ENCODE measurements at regions of chr6 and their contacts with region 1.

Region 1: GRCh38 chr6:5723841-5724691 is 282.7 kb downstream of the NRN1 start:
- DNase-seq: peak; percentile 65
- ATAC-seq: peak; percentile 92
- H3K4me3 Mint-ChIP-seq: peak overlapping the region; percentile 91
- H3K27ac Mint-ChIP-seq: peak overlapping the region; percentile 99
- H3K4me1 Mint-ChIP-seq: peaks cover 78% of the 10 kb centered on the region
- H3K27me3 Mint-ChIP-seq: no peaks in the 10 kb centered on the region
- CTCF ChIP-seq: no peak

Region 2: DNA sequence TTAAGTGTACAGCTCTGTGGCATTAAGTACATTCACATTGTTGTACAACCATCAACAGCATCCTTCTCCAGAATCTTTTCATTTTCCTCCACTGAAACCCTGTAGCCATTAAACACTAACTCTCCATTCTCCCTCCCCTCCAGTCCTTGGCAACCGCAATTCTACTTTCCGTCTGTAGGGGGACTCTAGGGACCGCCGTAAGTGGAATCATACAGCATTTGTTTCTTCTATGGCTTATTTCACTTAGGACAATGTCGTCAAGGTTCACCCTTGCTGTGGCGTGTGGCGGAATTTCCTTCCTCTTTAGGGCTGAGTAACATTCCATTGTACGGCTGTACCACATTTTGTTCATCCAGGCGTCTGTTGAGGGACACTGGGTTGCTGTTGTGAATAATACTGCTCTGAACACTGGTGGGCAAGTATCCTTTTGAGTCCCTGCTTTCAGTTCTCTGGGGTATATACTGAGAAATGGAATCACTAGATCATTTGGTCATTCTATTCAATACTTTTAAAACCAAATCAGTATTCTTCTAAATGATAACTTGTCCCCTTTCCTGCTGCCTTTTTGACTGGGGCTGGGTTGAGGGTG is 588.2 kb before region 1 on chr6:
- CTCF ChIA-PET with region 1: no interaction called
- POLR2A ChIA-PET with region 1: no interaction called
- intact Hi-C with region 1: loop called (anchors 10 kb)
- DNase-seq: no peak
- ATAC-seq: peak; percentile 27
- H3K4me3 Mint-ChIP-seq: no peak overlapping the region
- H3K27ac Mint-ChIP-seq: no peak overlapping the region
- H3K4me1 Mint-ChIP-seq: peaks cover 59% of the 10 kb centered on the region
- H3K27me3 Mint-ChIP-seq: no peaks in the 10 kb centered on the region
- CTCF ChIP-seq: peak; percentile 52

Region 3: DNA sequence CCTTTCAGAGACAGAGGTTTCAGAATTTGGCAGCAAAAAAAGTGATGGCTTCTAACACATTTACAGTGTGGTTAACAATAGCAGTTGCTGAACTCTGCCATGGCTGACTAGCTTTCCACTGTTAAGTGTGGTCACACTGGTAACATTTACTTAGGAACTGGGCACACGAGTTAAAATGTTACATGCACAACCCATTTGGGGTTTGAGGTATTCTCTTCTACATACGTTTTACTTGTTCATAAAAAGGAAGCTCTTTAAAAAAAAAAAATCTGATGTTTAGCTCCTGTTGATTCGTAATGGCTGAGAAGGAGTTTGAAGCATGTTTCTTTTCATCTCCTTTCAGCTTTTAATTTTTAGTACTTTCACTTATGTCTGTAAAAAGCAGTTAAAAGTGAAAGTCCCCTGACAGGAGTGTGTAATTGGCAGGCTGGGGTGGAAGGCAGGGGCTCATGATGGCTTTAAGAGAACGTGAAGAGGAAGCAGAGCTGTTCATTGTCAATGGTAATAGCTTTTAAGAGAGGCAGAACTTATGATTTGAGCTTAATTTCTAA is 216.9 kb before region 1 on chr6:
- CTCF ChIA-PET with region 1: no interaction called
- POLR2A ChIA-PET with region 1: interaction called, 4 read pairs
- intact Hi-C with region 1: loop called (anchors 5 kb)
- DNase-seq: no peak
- ATAC-seq: peak; percentile 68
- H3K4me3 Mint-ChIP-seq: peak overlapping the region; percentile 69
- H3K27ac Mint-ChIP-seq: peak overlapping the region; percentile 94
- H3K4me1 Mint-ChIP-seq: peaks cover 36% of the 10 kb centered on the region
- H3K27me3 Mint-ChIP-seq: no peaks in the 10 kb centered on the region
- CTCF ChIP-seq: no peak

Region 4: DNA sequence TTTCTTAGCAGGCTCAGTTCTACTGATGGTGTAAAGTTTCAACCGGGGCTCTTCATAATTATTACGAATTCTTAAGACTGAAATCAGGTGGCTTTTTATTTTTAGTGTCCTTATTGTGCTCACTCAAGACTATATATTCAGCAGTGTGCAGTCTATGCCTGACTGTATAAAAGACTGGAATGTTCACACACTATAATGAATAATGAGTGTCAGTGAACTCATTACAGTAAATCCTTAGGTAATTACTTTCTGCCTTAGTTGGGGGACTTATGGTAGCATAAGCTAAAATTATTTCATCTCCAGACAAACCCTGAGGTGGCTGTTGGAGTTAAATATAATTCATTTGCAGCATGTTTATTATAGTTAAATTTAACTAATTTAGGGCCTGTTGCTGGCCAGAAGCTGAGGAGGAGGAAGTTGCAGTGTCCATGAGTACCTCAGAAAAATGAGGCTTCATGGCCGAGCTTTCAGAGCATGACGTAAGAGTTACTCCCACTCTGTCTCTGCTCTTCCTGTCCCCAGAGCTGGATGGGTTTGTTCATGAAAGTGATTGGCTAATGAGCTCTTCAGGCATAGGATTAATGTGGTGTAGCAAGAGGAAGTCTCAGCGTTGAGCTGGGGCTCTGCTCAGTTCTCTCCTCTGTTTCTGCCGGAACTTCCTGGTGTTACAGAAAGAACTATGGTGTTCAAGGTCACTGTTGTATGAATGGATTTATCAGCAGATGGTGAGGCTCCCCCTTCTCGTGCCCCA is 53.1 kb before region 1 on chr6:
- CTCF ChIA-PET with region 1: no interaction called
- POLR2A ChIA-PET with region 1: no interaction called
- intact Hi-C with region 1: no loop called
- DNase-seq: no peak
- ATAC-seq: peak; percentile 75
- H3K4me3 Mint-ChIP-seq: no peak overlapping the region
- H3K27ac Mint-ChIP-seq: peak overlapping the region; percentile 57
- H3K4me1 Mint-ChIP-seq: peaks cover 31% of the 10 kb centered on the region
- H3K27me3 Mint-ChIP-seq: no peaks in the 10 kb centered on the region
- CTCF ChIP-seq: no peak

Region 5: GRCh38 chr6:5698318-5698717 is 25.7 kb before region 1 on chr6:
- CTCF ChIA-PET with region 1: no interaction called
- POLR2A ChIA-PET with region 1: no interaction called
- intact Hi-C with region 1: loop called (anchors 2 kb)
- DNase-seq: no peak
- ATAC-seq: no peak
- H3K4me3 Mint-ChIP-seq: no peak overlapping the region
- H3K27ac Mint-ChIP-seq: peak overlapping the region; percentile 26
- H3K4me1 Mint-ChIP-seq: peaks cover 39% of the 10 kb centered on the region
- H3K27me3 Mint-ChIP-seq: no peaks in the 10 kb centered on the region
- CTCF ChIP-seq: no peak

Region 6: GRCh38 chr6:6331946-6332601 is 608.0 kb after region 1 on chr6:
- CTCF ChIA-PET with region 1: no interaction called
- POLR2A ChIA-PET with region 1: no interaction called
- intact Hi-C with region 1: loop called (anchors 10 kb)
- DNase-seq: no peak
- ATAC-seq: peak; percentile 72
- H3K4me3 Mint-ChIP-seq: peak overlapping the region; percentile 81
- H3K27ac Mint-ChIP-seq: peak overlapping the region; percentile 100
- H3K4me1 Mint-ChIP-seq: peaks cover 48% of the 10 kb centered on the region
- H3K27me3 Mint-ChIP-seq: no peaks in the 10 kb centered on the region
- CTCF ChIP-seq: no peak